GM12878 (cell line): ENCODE measurements at regions of chr2 and their contacts with region 1.

Region 1: DNA sequence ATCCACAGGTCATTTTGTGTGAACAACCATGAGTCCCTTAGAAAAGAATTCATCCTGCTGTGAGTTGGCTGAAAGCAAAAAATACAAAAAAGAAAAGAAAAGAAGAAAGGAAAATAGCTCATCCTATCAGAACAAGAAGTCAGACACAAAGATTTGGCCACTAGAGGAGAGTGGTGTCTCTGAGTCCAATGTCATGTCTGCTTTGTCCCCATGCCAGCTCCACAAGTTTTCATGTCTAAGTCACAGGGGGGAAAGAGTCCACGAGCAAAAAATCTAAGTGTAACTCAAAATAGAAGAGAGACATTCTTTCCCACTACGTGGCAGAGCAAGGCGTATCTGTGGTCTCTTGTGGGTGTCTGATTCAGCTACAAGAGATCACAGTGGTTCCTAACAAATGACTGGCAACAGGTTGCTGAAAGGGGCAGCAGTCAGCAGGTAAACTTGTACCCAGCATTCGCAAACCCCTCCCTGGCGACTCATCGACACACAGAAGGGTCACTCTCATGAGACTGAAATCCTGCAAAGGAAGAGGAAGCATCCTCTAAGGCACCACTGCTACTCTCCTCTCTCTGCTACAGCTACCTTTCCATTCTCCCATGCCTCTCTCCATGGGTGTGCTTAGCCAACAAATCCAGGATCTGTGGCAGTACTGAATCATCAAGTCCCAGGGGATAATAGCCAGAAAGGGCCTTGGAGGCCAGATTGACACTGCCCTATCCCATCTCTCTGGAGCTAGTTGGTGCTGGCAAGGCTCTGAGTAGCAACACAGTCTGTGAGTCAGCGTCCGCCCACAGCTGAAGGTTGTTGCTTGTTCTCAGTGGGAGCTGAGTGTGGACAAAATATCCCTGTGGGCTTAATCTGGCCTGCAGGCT is 123.0 kb upstream of the SLC39A10 start:
- DNase-seq: no peak
- ATAC-seq: peak; percentile 42
- H3K4me3 ChIP-seq: no peak overlapping the region
- H3K27ac ChIP-seq: no peak overlapping the region; the same call in 1 of the 2 replicates
- H3K4me1 ChIP-seq: peaks cover 29% of the 10 kb centered on the region
- H3K27me3 ChIP-seq: no peaks in the 10 kb centered on the region
- CTCF ChIP-seq: peak; percentile 23 to 35 (median 30); a peak in 3 of 6 replicates
- EP300 ChIP-seq: no peak
- POLR2A ChIP-seq: no peak
- RAD21 ChIP-seq: peak; percentile 27; the same call in 1 of the 2 replicates

Region 2: DNA sequence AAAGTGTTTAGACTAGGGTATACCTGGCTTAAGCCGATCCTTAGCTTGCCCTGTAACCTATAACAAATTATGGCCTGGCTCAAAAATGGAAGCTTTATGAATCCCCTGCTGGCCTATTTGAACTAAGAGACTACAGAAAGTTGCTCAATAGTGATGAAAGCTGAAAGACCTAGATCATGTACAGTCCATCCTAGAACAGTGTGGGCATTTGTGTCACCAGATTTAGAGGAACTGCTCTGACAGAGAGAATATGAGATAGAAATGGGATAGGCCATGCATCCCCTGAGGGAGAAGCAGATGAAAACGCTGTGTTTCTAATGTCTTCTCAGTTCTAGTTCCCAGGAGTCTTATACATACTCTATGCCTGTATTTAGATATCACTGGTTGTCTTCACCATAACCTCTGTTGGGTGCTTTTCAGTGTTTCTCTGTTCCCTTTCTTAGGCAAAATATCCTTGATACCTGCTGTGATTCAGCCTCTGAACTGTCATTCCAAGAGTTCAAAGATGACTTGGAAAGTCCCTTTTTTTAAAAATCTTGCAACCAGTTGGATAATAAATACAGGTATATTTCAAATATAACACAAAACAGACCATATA is 123.8 kb before region 1 on chr2:
- CTCF ChIA-PET with region 1: no interaction called
- POLR2A ChIA-PET with region 1: interaction called, 3 read pairs
- RAD21 ChIA-PET with region 1: interaction called, 16 read pairs
- SMC1A ChIA-PET with region 1: interaction called, 4 read pairs
- in situ Hi-C with region 1: no loop called
- intact Hi-C with region 1: loop called (anchors 10 kb)
- DNase-seq: peak; percentile 60
- ATAC-seq: peak; percentile 80
- H3K4me3 ChIP-seq: no peak overlapping the region
- H3K27ac ChIP-seq: peak overlapping the region; percentile 29
- H3K4me1 ChIP-seq: no peaks in the 10 kb centered on the region
- H3K27me3 ChIP-seq: no peaks in the 10 kb centered on the region
- CTCF ChIP-seq: no peak
- EP300 ChIP-seq: peak; percentile 68 to 83; a peak in 3 of 4 replicates
- POLR2A ChIP-seq: no peak
- RAD21 ChIP-seq: no peak

Region 3: DNA sequence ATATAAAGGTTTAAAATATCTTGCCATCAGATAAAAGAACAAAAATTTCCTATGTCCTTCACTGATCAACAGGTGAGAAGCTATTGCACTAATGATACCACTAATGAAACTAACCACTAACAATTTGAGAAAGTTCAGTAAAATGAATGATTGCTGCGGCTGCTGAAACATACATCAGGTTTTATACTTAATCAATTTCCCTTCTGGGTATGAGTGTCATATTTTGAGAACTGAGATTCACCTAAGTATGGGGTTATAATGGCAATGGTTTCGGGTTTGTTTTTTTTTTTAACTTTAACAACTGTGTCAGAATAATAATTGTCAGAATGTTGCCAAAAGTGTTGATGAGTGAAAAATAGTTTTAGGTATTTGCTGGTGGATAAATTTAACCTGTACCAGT is 28.3 kb before region 1 on chr2:
- CTCF ChIA-PET with region 1: interaction called, 99 read pairs
- POLR2A ChIA-PET with region 1: interaction called, 4 read pairs
- RAD21 ChIA-PET with region 1: interaction called, 62 read pairs
- SMC1A ChIA-PET with region 1: interaction called, 80 read pairs
- in situ Hi-C with region 1: no loop called
- intact Hi-C with region 1: loop called (anchors 2 kb)
- DNase-seq: peak; percentile 83
- ATAC-seq: peak; percentile 95
- H3K4me3 ChIP-seq: no peak overlapping the region
- H3K27ac ChIP-seq: no peak overlapping the region
- H3K4me1 ChIP-seq: peaks cover 3% of the 10 kb centered on the region; the same call in 1 of the 2 replicates
- H3K27me3 ChIP-seq: no peaks in the 10 kb centered on the region
- CTCF ChIP-seq: no peak
- EP300 ChIP-seq: peak; percentile 95 to 97
- POLR2A ChIP-seq: no peak
- RAD21 ChIP-seq: no peak

Region 4: DNA sequence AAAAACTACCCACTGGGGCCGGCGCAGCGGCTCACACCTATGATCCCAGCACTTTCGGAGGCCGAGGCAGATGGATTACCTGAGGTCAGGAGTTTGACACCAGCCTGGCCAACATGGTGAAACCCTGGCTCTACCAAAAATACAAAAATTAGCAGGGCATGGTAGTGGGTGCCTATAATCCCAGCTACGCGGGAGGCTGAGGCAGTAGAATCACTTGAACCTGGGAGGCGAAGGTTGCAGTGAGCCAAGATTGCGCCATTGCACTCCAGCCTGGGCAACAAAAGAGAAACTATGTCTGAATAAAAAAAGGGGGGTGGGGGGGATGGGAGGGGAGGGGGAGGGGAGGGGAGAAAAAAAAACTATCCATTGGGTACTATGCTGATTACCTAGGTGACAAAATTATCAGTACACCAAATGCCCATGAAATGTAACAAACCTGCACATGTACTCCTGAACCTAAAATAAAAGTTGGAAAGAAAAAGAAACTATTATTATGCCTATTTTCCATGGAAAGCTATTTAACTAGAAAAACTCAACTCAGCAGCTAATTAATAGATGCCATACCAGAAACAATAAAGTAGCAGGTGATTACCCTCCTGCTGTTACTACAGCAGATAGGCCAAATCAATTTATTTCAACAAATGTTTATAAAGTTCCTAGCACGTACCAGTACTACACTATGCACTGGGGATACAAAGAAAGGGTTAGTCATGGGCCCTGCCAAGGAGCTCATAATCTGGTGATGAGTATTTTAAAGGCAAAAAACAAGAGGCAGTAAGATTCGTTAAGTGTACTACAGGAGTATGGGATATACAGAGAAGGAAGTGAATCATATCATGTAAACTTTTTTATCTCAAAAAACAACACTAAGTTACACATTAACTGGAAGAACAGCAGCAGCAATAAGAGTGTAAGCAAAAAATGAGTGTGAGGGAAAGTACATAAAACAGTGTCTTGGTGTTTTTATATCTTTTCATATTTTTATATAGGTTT is 10.2 kb after region 1 on chr2:
- CTCF ChIA-PET with region 1: interaction called, 17 read pairs
- POLR2A ChIA-PET with region 1: interaction called, 17 read pairs
- RAD21 ChIA-PET with region 1: interaction called, 39 read pairs
- SMC1A ChIA-PET with region 1: interaction called, 24 read pairs
- in situ Hi-C with region 1: no loop called
- intact Hi-C with region 1: no loop called
- DNase-seq: no peak
- ATAC-seq: peak; percentile 94
- H3K4me3 ChIP-seq: no peak overlapping the region
- H3K27ac ChIP-seq: no peak overlapping the region
- H3K4me1 ChIP-seq: no peaks in the 10 kb centered on the region
- H3K27me3 ChIP-seq: no peaks in the 10 kb centered on the region
- CTCF ChIP-seq: no peak
- EP300 ChIP-seq: peak; percentile 25 to 56; a peak in 1 of 4 replicates
- POLR2A ChIP-seq: no peak
- RAD21 ChIP-seq: no peak

Region 5: GRCh38 chr2:195566211-195566610 is 32.2 kb after region 1 on chr2:
- CTCF ChIA-PET with region 1: interaction called, 218 read pairs
- POLR2A ChIA-PET with region 1: interaction called, 109 read pairs
- RAD21 ChIA-PET with region 1: interaction called, 282 read pairs
- SMC1A ChIA-PET with region 1: interaction called, 435 read pairs
- in situ Hi-C with region 1: no loop called
- intact Hi-C with region 1: no loop called
- DNase-seq: no peak
- ATAC-seq: no peak
- H3K4me3 ChIP-seq: no peak overlapping the region
- H3K27ac ChIP-seq: no peak overlapping the region
- H3K4me1 ChIP-seq: peaks cover 15% of the 10 kb centered on the region
- H3K27me3 ChIP-seq: no peaks in the 10 kb centered on the region
- CTCF ChIP-seq: no peak
- EP300 ChIP-seq: no peak
- POLR2A ChIP-seq: no peak
- RAD21 ChIP-seq: no peak

Region 6: GRCh38 chr2:195649629-195650190 is 115.7 kb after region 1 on chr2:
- CTCF ChIA-PET with region 1: interaction called, 11 read pairs
- POLR2A ChIA-PET with region 1: interaction called, 18 read pairs
- RAD21 ChIA-PET with region 1: interaction called, 44 read pairs
- SMC1A ChIA-PET with region 1: interaction called, 61 read pairs
- in situ Hi-C with region 1: no loop called
- intact Hi-C with region 1: no loop called
- DNase-seq: no peak
- ATAC-seq: peak; percentile 47
- H3K4me3 ChIP-seq: peak overlapping the region; percentile 17; the same call in 1 of the 2 replicates
- H3K27ac ChIP-seq: peak overlapping the region; percentile 80
- H3K4me1 ChIP-seq: peaks cover 20% of the 10 kb centered on the region
- H3K27me3 ChIP-seq: no peaks in the 10 kb centered on the region
- CTCF ChIP-seq: no peak
- EP300 ChIP-seq: no peak; a peak in 1 of 4 replicates
- POLR2A ChIP-seq: no peak
- RAD21 ChIP-seq: no peak

Region 7: GRCh38 chr2:196239622-196240587 is 705.9 kb after region 1 on chr2:
- CTCF ChIA-PET with region 1: no interaction called
- POLR2A ChIA-PET with region 1: no interaction called
- RAD21 ChIA-PET with region 1: no interaction called
- SMC1A ChIA-PET with region 1: no interaction called
- in situ Hi-C with region 1: no loop called
- intact Hi-C with region 1: loop called (anchors 10 kb)
- DNase-seq: peak; percentile 86
- ATAC-seq: peak; percentile 79
- H3K4me3 ChIP-seq: no peak overlapping the region
- H3K27ac ChIP-seq: peak overlapping the region; percentile 75
- H3K4me1 ChIP-seq: peaks cover 36% of the 10 kb centered on the region
- H3K27me3 ChIP-seq: no peaks in the 10 kb centered on the region
- CTCF ChIP-seq: 0 out of 6 replicates have a peak, but pooled peaks of 1 of the 3 experiments have one; percentile 3
- EP300 ChIP-seq: peak; percentile 74 to 85
- POLR2A ChIP-seq: no peak
- RAD21 ChIP-seq: 0 out of 2 replicates have a peak, but pooled peaks have one; percentile 19